ENCODE measurements at regions of chr17 and their contacts with region 1.

Region 1: GRCh38 chr17:67959288-67959900 is 36.9 kb downstream of the C17orf58 start:
- DNase-seq: no peak
- ATAC-seq: peak; percentile 35 to 48; a peak in 4 of 6 replicates
- H3K4me3 ChIP-seq: no peak overlapping the region
- H3K27ac ChIP-seq: no peak overlapping the region
- H3K4me1 ChIP-seq: peaks cover 10% of the 10 kb centered on the region; the same call in 2 of the 3 replicates
- CTCF ChIP-seq: no peak
- EP300 ChIP-seq: no peak
- POLR2A ChIP-seq: no peak
- RAD21 ChIP-seq: no peak

Region 2: GRCh38 chr17:67942810-67943209 is 16.6 kb before region 1 on chr17:
- CTCF ChIA-PET with region 1: interaction called, 15 read pairs
- POLR2A ChIA-PET with region 1: no interaction called
- DNase-seq: peak; percentile 25 to 32
- ATAC-seq: peak; percentile 64 to 82; a peak in 5 of 6 replicates
- H3K4me3 ChIP-seq: no peak overlapping the region
- H3K27ac ChIP-seq: no peak overlapping the region
- H3K4me1 ChIP-seq: no peaks in the 10 kb centered on the region
- CTCF ChIP-seq: peak; percentile 49
- EP300 ChIP-seq: no peak
- POLR2A ChIP-seq: no peak
- RAD21 ChIP-seq: peak in 1 of 2 experiments; percentile 11; a peak in 1 of 5 replicates

Region 3: DNA sequence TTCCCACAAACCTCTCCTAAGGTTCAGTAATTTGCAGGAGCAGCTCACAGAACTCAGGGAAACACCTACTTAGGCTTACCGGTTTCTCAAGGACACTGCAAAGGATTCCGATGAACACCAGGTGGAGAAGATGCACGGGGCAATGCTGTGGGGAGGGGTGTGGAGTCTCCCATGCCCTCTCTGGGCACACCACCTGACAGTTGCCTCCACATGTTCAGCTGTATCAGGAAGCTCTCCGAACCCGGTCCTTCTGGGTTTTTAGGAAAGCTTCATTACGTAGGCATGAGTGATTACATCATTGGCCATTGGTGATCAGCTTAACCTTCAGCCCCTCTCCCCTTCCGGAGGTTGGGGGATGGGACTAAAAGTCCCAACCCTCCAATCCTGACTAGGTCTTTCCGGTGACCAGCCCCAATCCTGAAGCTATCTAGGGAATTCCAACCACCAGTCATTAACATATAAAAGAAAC is 15.2 kb after region 1 on chr17:
- CTCF ChIA-PET with region 1: interaction called, 10 read pairs
- POLR2A ChIA-PET with region 1: no interaction called
- DNase-seq: no peak
- ATAC-seq: peak; percentile 53 to 56; a peak in 4 of 6 replicates
- H3K4me3 ChIP-seq: no peak overlapping the region
- H3K27ac ChIP-seq: no peak overlapping the region
- H3K4me1 ChIP-seq: peaks cover 8% of the 10 kb centered on the region; the same call in 2 of the 3 replicates
- CTCF ChIP-seq: no peak
- EP300 ChIP-seq: no peak
- POLR2A ChIP-seq: no peak
- RAD21 ChIP-seq: no peak

Measured in A549 (cell line).